ENCODE measurements at regions of chr11 and their contacts with region 1.

Region 1: DNA sequence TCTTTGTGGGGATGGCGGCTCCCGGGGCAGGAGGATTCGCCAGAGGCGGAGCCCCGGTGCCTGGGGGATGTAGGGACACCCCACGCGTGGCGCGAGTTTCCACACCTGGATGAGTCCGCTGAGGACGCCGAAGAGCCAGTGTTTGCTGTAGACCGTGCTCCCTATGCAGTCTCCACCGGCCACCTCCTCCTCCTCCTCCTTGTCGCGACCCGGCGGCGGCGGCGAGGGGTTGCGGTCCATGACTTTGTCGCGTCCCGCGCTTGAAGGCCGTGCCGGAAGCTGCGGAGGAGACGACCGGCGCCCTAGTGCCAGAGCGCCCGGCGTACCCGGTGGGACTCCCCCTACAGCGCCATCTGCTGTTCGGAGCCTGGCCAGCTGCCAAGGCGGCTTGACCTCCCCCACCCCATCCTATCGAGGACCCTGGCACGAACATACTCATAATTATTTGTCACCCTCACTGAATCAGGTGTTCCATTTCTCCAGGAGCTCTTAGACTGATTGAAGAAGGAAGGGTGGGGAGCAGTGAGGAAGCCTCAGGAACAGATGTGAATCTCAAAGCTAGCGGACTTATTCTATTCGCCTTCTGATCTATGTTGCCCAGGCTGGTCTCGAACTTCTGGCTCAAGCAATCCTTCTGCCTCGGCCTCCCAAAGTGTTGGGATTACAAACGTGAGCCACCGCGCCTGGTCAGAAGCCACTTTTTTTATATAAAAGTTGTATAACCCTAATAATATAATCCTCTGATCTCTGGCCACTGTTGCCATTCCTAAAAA is at the start of gene SAAL1:
- DNase-seq: peak; percentile 69 to 96 (median 90)

Region 2: DNA sequence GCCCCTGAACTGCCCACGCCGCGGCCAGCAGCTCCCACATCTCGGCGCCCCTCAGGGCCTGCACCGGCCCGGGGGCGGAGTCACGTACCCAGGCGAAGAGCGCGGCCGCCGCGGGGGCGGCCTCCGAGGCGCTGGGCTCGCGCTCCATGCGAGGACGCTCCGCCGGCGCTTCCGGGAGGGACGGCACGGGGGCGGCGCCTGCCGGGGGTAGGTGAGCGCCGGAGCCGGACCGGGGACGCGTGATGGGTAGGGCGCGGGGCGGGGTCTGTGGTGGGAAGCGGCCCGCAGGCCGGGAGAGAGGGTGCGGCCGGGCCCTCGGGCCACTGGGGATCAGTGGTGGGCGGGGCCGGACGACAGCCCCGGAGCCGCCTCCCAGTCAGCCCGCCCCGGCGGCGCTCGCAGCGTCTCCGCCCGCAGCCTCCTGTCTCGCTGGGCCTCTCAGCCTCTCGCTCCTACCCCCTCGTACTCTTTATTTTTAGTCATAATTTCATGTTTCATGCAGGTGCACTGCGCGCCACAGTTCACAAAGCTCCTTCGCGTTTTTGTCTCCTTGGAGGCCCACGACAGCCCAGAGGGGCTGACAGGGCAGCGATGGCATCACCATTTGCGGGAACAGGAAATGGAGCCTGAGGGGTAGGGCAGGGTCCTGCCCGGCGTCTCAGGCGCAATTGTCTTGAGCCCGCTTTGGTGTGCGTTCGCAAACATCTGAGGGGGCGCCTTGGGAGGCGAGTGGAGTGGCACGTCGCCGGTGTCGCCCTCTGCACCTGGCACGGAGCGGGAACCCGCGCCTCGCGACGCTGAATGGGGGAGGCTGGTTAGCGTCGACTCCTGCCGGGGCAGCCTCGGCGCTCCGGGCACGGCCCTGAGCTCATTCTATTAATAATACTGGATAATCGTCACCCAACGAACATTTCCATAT is 92.9 kb before region 1 on chr11 and contains the start of gene SERGEF:
- intact Hi-C with region 1: loop called (anchors 5 kb)
- DNase-seq: peak; percentile 35 to 94 (median 84)